PC-9 (cell line): ENCODE measurements at regions of chr3 and their contacts with region 1.

Region 1: GRCh38 chr3:44861412-44862220 is at the start of gene TMEM42:
- DNase-seq: peak; percentile 67 to 86
- H3K4me3 ChIP-seq: peak within 1 kb of the TSS; percentile 80
- H3K27ac ChIP-seq: peak within 1 kb of the TSS; percentile 41
- H3K4me1 ChIP-seq: peaks cover 7% of the 10 kb centered on the region
- H3K27me3 ChIP-seq: no peaks in the 10 kb centered on the region
- CTCF ChIP-seq: no peak
- total RNA-seq, gene TMEM42: 18.2 and 22.4 TPM in 2 replicates

Region 2: GRCh38 chr3:44729384-44729910 is 132.2 kb before region 1 on chr3 and contains the start of gene ZNF501:
- CTCF ChIA-PET with region 1: no interaction called
- POLR2A ChIA-PET with region 1: no interaction called
- intact Hi-C with region 1: no loop called
- DNase-seq: peak; percentile 80 to 91
- H3K4me3 ChIP-seq: peak within 1 kb of the TSS; percentile 81
- H3K27ac ChIP-seq: peak within 1 kb of the TSS; percentile 41
- H3K4me1 ChIP-seq: 0 out of 2 replicates have a peak, but pooled peaks cover 5% of the 10 kb centered on the region
- H3K27me3 ChIP-seq: no peaks in the 10 kb centered on the region
- CTCF ChIP-seq: no peak
- total RNA-seq, gene ZNF501: 2.6 and 3.9 TPM in 2 replicates

Region 3: DNA sequence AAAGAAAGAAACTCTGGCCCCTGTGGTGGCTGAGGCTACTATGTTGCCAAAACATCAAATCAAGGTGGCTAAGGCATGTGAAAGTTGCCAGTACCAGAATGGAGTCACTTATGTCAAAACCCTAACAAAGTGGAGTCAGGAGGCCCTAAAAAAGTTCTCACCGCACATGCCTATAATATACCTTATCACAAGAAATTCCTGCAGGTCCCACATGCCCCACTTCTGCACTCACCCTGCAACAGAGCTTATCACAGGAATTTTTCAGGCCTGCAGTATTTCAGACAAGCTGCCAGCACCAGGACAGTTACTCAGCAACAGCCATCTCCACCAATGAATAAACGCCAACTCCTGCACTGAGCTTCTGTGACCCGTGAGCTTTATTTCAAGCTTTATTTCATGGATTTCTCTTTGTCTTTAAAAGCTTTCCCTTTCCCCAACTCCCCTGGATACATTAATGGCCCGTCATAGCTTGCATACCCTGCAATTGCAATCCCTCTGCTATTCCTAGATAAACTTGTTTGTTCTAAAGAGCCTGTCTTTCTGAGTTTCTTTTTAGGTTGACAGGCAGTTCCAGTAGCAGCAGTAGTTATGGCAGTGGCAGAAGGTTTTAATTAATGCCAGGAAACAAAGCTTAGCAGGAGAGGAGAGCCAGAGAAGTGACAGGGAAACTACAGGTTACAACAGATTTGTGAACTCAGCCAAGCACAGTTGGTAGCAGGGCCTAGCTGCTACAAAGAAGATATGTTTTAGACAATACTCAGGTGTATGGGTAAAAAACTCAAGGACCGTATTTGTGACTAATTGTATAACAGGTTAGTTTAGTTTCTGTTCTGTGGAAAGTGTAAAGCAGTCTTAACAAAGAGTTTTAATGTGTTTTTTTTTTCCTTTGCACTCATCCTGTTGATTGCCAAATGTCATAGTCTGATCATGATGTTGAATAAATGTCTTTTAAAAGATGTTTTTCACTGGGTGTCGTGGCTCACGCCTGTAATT is 15.8 kb before region 1 on chr3:
- CTCF ChIA-PET with region 1: no interaction called
- POLR2A ChIA-PET with region 1: no interaction called
- intact Hi-C with region 1: no loop called
- DNase-seq: peak in 1 of 2 experiments; percentile 71
- H3K4me3 ChIP-seq: no peak overlapping the region
- H3K27ac ChIP-seq: peak overlapping the region; percentile 50
- H3K4me1 ChIP-seq: peaks cover 9% of the 10 kb centered on the region; the same call in 1 of the 2 replicates
- H3K27me3 ChIP-seq: no peaks in the 10 kb centered on the region
- CTCF ChIP-seq: no peak

Region 4: GRCh38 chr3:44883999-44884431 is 22.4 kb after region 1 on chr3:
- CTCF ChIA-PET with region 1: no interaction called
- POLR2A ChIA-PET with region 1: no interaction called
- intact Hi-C with region 1: loop called (anchors 1 kb)
- DNase-seq: peak; percentile 68 to 91
- H3K4me3 ChIP-seq: no peak overlapping the region
- H3K27ac ChIP-seq: peak overlapping the region; percentile 77
- H3K4me1 ChIP-seq: peaks cover 43% of the 10 kb centered on the region
- H3K27me3 ChIP-seq: no peaks in the 10 kb centered on the region
- CTCF ChIP-seq: no peak

Region 5: DNA sequence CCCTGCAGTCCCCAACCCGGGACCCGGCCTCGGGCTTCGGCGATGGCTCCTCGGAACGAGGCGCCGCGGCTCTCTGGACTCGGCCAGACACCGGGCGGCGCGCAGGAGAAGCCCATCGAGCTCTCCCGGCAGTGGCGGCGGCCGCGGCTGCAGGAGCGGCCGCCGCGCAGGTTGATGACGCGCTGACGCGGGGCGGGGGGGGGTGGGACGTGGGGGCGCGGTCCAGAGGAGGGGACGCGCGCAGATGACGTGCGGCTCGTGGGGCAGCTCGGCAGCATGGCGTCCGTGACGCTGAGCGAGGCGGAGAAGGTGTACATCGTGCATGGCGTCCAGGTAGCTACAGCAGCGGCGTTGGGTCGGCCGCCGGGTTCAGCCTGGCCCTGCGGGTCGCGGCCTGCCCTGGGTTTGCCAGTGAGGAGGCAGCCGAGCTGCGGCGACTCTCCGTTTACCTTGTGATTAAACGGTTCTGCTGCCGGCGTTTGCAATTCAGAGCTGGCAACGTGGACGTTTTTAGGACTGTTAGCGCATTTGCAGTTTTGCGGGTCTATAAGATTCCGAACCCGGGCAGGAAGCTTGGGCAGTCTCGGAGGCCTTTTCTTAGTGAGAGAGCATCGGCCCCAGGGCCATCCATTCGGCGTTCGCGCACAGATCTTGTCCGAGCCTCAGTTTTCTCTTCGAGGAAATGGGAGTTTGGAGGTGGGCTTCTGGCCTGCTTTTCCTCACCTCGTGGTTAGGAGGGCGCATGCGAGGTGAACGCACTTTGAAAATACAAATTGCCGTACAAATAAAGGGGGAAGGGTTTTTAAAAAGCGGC is 114.6 kb after region 1 on chr3 and contains the starts of genes EXOSC7 and ZDHHC3:
- CTCF ChIA-PET with region 1: no interaction called
- POLR2A ChIA-PET with region 1: no interaction called
- intact Hi-C with region 1: no loop called
- DNase-seq: peak; percentile 66 to 69
- H3K4me3 ChIP-seq: peak within 1 kb of the TSS; percentile 85
- H3K27ac ChIP-seq: peak within 1 kb of the TSS; percentile 63
- H3K4me1 ChIP-seq: peaks cover 68% of the 10 kb centered on the region
- H3K27me3 ChIP-seq: no peaks in the 10 kb centered on the region
- CTCF ChIP-seq: no peak
- total RNA-seq, gene EXOSC7: 56.2 and 58.0 TPM in 2 replicates
- total RNA-seq, gene ZDHHC3: 107 and 118 TPM in 2 replicates